Natural killer cell (primary cell): ENCODE measurements at regions of chr14 and their contacts with region 1.

Region 1: DNA sequence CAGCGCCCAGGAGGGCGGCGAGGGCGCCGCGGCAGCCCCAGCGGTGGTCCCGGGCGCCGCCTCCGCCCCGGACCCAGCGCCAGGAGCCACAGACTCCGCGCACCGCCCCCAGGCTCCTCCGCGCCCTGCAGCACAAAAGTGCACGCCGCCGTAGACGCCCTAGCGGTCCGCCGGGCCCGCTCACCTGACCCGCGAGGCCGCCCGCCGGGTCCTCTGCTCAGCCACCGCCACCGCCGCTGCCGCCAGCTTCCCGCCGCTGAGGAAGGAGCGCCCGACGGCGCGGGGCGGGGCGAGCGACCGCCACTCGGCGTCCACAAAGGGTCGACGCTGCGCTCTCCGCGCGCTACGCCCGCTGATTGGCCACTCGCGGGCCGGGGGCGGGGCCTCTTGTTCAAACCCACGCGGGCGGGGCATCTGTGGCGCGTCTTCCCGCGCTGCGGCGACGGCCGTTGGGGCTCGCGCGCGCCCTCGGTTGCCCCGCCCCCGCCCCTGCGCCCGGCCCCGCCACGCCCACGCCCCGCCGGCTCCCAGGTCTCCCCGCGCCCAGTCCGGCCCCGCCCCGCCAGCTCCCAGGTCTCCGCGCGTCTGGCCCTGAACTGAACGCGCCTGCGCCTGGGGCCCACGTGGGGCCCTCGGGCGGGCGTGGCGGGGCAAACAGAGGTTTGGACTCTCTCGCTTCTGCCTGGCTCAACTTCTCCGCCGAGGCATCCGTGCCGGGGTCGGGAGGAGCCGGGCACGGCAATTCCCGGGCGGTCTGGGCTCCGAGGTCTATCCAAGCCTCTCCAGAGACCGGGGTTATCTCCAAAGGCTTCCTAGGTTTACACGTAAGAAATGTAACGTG is at the start of gene CDCA4:
- DNase-seq: peak; percentile 98
- ATAC-seq: peak; percentile 83 to 93 (median 84)
- H3K4me3 ChIP-seq: peak within 1 kb of the TSS; percentile 75
- H3K4me3 Mint-ChIP-seq: peak within 1 kb of the TSS; percentile 90
- H3K27ac ChIP-seq: peak within 1 kb of the TSS; percentile 77
- H3K27ac Mint-ChIP-seq: peak within 1 kb of the TSS; percentile 88 to 92
- H3K4me1 ChIP-seq: peaks cover 44% of the 10 kb centered on the region
- H3K4me1 Mint-ChIP-seq: peaks cover 35% of the 10 kb centered on the region in 2 donors
- H3K27me3 ChIP-seq: no peaks in the 10 kb centered on the region
- H3K27me3 Mint-ChIP-seq: no peaks in the 10 kb centered on the region
- CTCF ChIP-seq: no peak
- total RNA-seq, gene CDCA4: 10.3 to 20.7 (median 16.6) TPM

Region 2: GRCh38 chr14:104985675-104986525 is 35.1 kb before region 1 on chr14 and contains the start of gene CLBA1:
- intact Hi-C with region 1: loop called (anchors 1 kb)
- DNase-seq: peak; percentile 83 to 97
- ATAC-seq: peak; percentile 94 to 96 (median 95)
- H3K4me3 ChIP-seq: peak within 1 kb of the TSS; percentile 43
- H3K4me3 Mint-ChIP-seq: peak within 1 kb of the TSS; percentile 81
- H3K27ac ChIP-seq: peak within 1 kb of the TSS; percentile 49
- H3K27ac Mint-ChIP-seq: peak within 1 kb of the TSS; percentile 72 to 84
- H3K4me1 ChIP-seq: peaks cover 13% of the 10 kb centered on the region
- H3K4me1 Mint-ChIP-seq: peaks cover 0 to 9% of the 10 kb centered on the region in 2 donors
- H3K27me3 ChIP-seq: no peaks in the 10 kb centered on the region
- H3K27me3 Mint-ChIP-seq: no peaks in the 10 kb centered on the region
- CTCF ChIP-seq: no peak
- total RNA-seq, gene CLBA1: 1.2 to 1.8 (median 1.3) TPM